ENCODE measurements at regions of chr10 and their contacts with region 1.

Region 1: DNA sequence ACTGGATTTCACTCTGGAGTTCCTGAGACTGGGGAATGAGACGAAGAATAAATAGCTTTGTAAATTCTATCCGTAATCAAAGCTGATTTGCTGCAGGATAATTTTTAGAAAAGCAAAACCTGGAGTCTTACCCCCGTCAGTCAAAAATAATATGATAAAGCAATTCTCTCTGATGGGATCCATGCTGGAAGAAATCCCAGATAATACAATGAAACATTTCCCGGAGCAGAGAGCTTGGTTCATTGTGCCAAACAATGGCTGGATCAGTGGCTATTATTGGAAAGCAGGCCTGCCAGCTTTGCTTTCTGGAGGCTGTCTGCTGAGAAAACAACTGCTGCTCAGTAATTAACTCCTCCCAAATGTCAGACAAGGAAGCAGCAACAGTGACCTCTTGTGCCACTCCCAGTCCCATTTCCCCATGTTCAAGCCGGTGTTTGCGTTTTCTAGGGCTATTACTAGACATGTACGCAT is 609.4 kb upstream of the PCDH15 start:
- DNase-seq: peak; percentile 15 to 49
- ATAC-seq: peak; percentile 74 to 98 (median 96)
- H3K4me3 ChIP-seq: peak overlapping the region; percentile 15
- H3K27ac ChIP-seq: peak overlapping the region; percentile 27
- H3K4me1 ChIP-seq: no peaks in the 10 kb centered on the region
- H3K27me3 ChIP-seq: no peaks in the 10 kb centered on the region
- CTCF ChIP-seq: peak; percentile 30

Region 2: GRCh38 chr10:55091691-55092328 is 318.6 kb before region 1 on chr10:
- intact Hi-C with region 1: loop called in 1 of 2 experiments (anchors 10 kb)
- DNase-seq: no peak
- ATAC-seq: no peak
- H3K4me3 ChIP-seq: no peak overlapping the region
- H3K27ac ChIP-seq: no peak overlapping the region
- H3K4me1 ChIP-seq: no peaks in the 10 kb centered on the region
- H3K27me3 ChIP-seq: no peaks in the 10 kb centered on the region
- CTCF ChIP-seq: peak; percentile 64

Measured in psoas muscle (tissue), 8 donors.